Activated CD4-positive, alpha-beta T cell treated with anti-CD3 and anti-CD28 coated beads for 36 hours (primary cell): ENCODE measurements at regions of chr2 and their contacts with region 1.

Region 1: GRCh38 chr2:219104107-219105035 is 43.6 kb upstream of the IHH start:
- DNase-seq: peak; percentile 36
- ATAC-seq: peak; percentile 80
- H3K4me3 Mint-ChIP-seq: no peak overlapping the region
- H3K27ac Mint-ChIP-seq: peak overlapping the region; percentile 44
- H3K4me1 Mint-ChIP-seq: peaks cover 33% of the 10 kb centered on the region
- H3K27me3 Mint-ChIP-seq: no peaks in the 10 kb centered on the region

Region 2: GRCh38 chr2:219087361-219087760 is 17.0 kb before region 1 on chr2:
- CTCF ChIA-PET with region 1: interaction called, 18 read pairs
- POLR2A ChIA-PET with region 1: interaction called, 3 read pairs
- intact Hi-C with region 1: no loop called
- DNase-seq: no peak
- ATAC-seq: no peak
- H3K4me3 Mint-ChIP-seq: no peak overlapping the region
- H3K27ac Mint-ChIP-seq: no peak overlapping the region
- H3K4me1 Mint-ChIP-seq: peaks cover 9% of the 10 kb centered on the region
- H3K27me3 Mint-ChIP-seq: no peaks in the 10 kb centered on the region

Region 3: GRCh38 chr2:219119422-219120043 is 15.2 kb after region 1 on chr2:
- CTCF ChIA-PET with region 1: interaction called, 74 read pairs
- POLR2A ChIA-PET with region 1: no interaction called
- intact Hi-C with region 1: no loop called
- DNase-seq: peak; percentile 82
- ATAC-seq: peak; percentile 72
- H3K4me3 Mint-ChIP-seq: no peak overlapping the region
- H3K27ac Mint-ChIP-seq: no peak overlapping the region
- H3K4me1 Mint-ChIP-seq: peaks cover 6% of the 10 kb centered on the region
- H3K27me3 Mint-ChIP-seq: no peaks in the 10 kb centered on the region

Region 4: GRCh38 chr2:219131327-219131726 is 27.0 kb after region 1 on chr2:
- CTCF ChIA-PET with region 1: interaction called, 10 read pairs
- POLR2A ChIA-PET with region 1: no interaction called
- intact Hi-C with region 1: no loop called
- DNase-seq: no peak
- ATAC-seq: no peak
- H3K4me3 Mint-ChIP-seq: no peak overlapping the region
- H3K27ac Mint-ChIP-seq: no peak overlapping the region
- H3K4me1 Mint-ChIP-seq: no peaks in the 10 kb centered on the region
- H3K27me3 Mint-ChIP-seq: no peaks in the 10 kb centered on the region